Right lobe of liver (tissue), 6 donors: ENCODE measurements at regions of chr1 and their contacts with region 1.

Region 1: GRCh38 chr1:155050560-155051341 is at the start of gene ADAM15:
- DNase-seq: peak; percentile 89 to 91 (median 91)
- ATAC-seq: peak; percentile 79 to 89 (median 84)
- H3K4me3 ChIP-seq: peak within 1 kb of the TSS; percentile 69 to 74 (median 70)
- H3K27ac ChIP-seq: peak within 1 kb of the TSS; percentile 59 to 82 (median 79)
- H3K4me1 ChIP-seq: peaks cover 0 to 22% (median 10%) of the 10 kb centered on the region in 4 donors
- H3K27me3 ChIP-seq: no peaks in the 10 kb centered on the region
- CTCF ChIP-seq: peak; percentile 90 to 99 (median 98)
- POLR2A ChIP-seq: peak; percentile 55
- total RNA-seq, gene ADAM15: 16.2 to 33.9 (median 26.4) TPM

Region 2: DNA sequence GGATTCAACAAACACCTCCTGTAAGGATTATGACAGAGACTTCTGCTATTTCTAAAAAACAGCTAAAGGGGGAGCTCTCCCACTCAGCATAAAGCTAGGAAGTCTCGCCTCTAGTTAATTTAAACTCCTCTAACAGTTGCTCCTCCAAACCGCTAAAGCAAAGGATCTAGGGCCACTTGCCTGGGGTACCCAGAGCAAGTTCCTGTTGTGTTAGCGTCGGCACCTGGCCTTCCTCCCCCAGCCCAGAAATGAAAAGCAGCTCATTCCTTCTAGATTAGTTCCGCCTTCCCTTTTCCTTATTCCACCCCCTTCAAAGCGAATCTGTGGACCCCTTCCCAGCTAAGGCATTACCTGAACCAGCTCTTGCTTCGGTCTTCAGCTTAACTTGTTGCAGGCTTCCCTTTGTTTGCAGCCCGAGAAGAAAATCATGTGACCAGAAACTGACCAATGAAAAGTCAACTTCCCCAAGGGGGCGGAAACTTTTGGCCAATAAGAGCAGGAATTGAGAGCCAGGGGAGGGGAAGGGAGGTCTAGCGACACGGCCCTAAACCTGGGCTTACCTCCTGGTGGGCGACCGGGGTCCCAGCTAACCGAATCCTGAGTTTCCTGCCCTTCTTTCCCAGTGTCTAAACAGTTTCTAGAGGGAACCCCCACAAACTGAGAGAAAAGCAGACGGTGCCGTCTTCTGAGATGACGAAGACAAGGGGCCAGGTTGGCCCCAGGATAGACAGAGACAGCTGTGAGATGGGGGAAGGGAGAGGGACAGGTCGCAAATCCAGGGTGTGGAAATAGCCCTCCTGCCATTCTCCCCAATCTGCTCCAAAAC is 94.8 kb before region 1 on chr1 and contains the start of gene PBXIP1:
- intact Hi-C with region 1: loop called in 1 of 2 experiments (anchors 10 kb)
- DNase-seq: peak; percentile 58 to 85 (median 59)
- ATAC-seq: peak; percentile 84 to 92 (median 86)
- H3K4me3 ChIP-seq: peak within 1 kb of the TSS; percentile 35 to 66 (median 54)
- H3K27ac ChIP-seq: peak within 1 kb of the TSS; percentile 35 to 74 (median 60)
- H3K4me1 ChIP-seq: peaks cover 0 to 32% (median 4%) of the 10 kb centered on the region in 4 donors
- H3K27me3 ChIP-seq: no peaks in the 10 kb centered on the region
- CTCF ChIP-seq: peak in 2 of 4 donors; percentile 11 to 30
- POLR2A ChIP-seq: peak; percentile 15
- total RNA-seq, gene PBXIP1: 16.7 to 25.9 (median 19.1) TPM

Region 3: GRCh38 chr1:154982897-154983648 is 67.7 kb before region 1 on chr1 and contains the start of gene FLAD1:
- intact Hi-C with region 1: loop called in 1 of 2 experiments (anchors 10 kb)
- DNase-seq: peak; percentile 94 to 99 (median 96)
- ATAC-seq: peak; percentile 98 to 99 (median 98)
- H3K4me3 ChIP-seq: peak within 1 kb of the TSS; percentile 55 to 83 (median 75)
- H3K27ac ChIP-seq: peak within 1 kb of the TSS; percentile 1 to 58 (median 35)
- H3K4me1 ChIP-seq: peaks cover 0 to 26% (median 4%) of the 10 kb centered on the region in 4 donors
- H3K27me3 ChIP-seq: no peaks in the 10 kb centered on the region
- CTCF ChIP-seq: no peak
- POLR2A ChIP-seq: peak; percentile 32
- total RNA-seq, gene FLAD1: 18.3 to 33.1 (median 24.6) TPM